Cardiac septum (tissue), 1 donor: ENCODE measurements at regions of chr16 and their contacts with region 1.

Region 1: GRCh38 chr16:75224306-75225091 is 5.7 kb downstream of the CTRB1 start:
- DNase-seq: no peak

Region 2: GRCh38 chr16:75206749-75207451 is 17.6 kb before region 1 on chr16 and contains the start of gene CTRB2:
- intact Hi-C with region 1: loop called (anchors 2 kb)
- DNase-seq: no peak
- total RNA-seq, gene CTRB2: not detected

Region 3: GRCh38 chr16:75402821-75403475 is 178.4 kb after region 1 on chr16:
- intact Hi-C with region 1: no loop called
- DNase-seq: no peak